ENCODE measurements at regions of chr6 and their contacts with region 1.

Region 1: GRCh38 chr6:169079650-169080049 is 174.0 kb downstream of the THBS2 start:
- DNase-seq: peak; percentile 39
- H3K4me3 ChIP-seq: no peak overlapping the region
- H3K27ac ChIP-seq: no peak overlapping the region
- H3K4me1 ChIP-seq: peaks cover 6% of the 10 kb centered on the region
- H3K27me3 ChIP-seq: no peaks in the 10 kb centered on the region
- CTCF ChIP-seq: no peak

Region 2: DNA sequence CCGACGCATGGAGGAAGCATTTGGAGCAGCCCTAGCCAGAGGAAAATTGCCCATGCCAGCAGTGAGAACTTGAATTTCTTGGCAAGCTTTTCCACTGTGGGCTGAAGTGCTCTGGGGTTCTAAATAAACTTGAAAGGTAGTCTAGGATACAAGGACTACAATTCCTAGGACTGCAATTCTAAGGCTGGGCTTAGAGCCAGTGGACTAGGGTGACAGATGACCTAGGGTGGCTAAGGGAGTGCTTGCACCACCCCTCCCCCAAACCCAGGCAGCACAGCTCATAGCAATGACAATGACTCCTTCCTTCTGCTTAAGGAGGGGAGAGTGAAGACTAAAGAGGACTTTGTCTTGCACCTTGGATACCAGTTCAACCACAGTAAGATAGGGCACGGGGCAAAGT is 51.7 kb after region 1 on chr6:
- CTCF ChIA-PET with region 1: no interaction called
- dilution Hi-C with region 1: loop called (anchors 5 kb)
- in situ Hi-C with region 1: no loop called
- intact Hi-C with region 1: no loop called
- DNase-seq: no peak
- H3K4me3 ChIP-seq: no peak overlapping the region
- H3K27ac ChIP-seq: no peak overlapping the region
- H3K4me1 ChIP-seq: peaks cover 11% of the 10 kb centered on the region
- H3K27me3 ChIP-seq: no peaks in the 10 kb centered on the region
- CTCF ChIP-seq: no peak